Heart left ventricle (tissue), 16 donors: ENCODE measurements at regions of chr16 and their contacts with region 1.

Region 1: DNA sequence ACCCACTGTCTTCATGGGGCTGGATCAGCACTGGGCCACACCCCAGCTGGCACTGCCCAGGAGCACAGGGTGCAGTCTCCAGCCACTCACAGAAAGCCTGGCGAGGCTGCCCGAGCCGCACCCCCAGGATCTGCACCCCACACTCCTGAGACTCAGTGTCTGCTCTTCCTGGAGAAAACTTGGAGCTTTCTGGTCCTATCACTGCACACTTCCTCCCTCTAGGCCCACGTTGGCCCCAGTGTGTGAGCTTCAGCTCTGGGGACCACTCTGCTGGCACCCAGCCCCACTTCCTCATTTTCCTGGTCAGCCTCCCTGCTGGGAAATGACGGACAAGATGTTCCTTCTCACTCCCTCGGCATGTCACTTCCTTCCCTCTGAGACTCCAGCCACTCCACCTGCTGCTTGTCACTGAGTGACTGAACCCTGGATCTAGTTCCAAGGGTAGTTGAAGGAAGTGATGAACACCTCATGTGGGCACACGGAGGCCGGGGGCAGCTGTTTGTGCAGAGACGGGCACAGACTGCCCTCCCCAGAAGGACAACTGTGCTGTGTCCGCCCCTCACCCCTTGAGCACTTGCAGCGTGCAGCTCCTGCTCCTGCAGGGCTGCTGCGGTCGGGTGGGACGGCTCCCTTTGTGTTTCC is 29.0 kb downstream of the ZC3H18 start:
- DNase-seq: peak; percentile 88 to 93 (median 91)
- ATAC-seq: peak; percentile 86 to 96 (median 87)
- H3K4me3 ChIP-seq: peak overlapping the region in 1 of 12 donors; percentile 17
- H3K27ac ChIP-seq: peak overlapping the region; percentile 69 to 86 (median 80)
- H3K4me1 ChIP-seq: peaks cover 0 to 66% (median 36%) of the 10 kb centered on the region in 12 donors
- H3K27me3 ChIP-seq: no peaks in the 10 kb centered on the region
- CTCF ChIP-seq: no peak
- POLR2A ChIP-seq: peak in 1 of 2 donors; percentile 21

Region 2: GRCh38 chr16:88561485-88562369 is 37.5 kb before region 1 on chr16:
- intact Hi-C with region 1: no loop called
- DNase-seq: peak in 3 of 5 donors; percentile 29 to 44 (median 43)
- ATAC-seq: peak; percentile 39 to 59 (median 49)
- H3K4me3 ChIP-seq: peak overlapping the region in 7 of 12 donors; percentile 12 to 47 (median 22)
- H3K27ac ChIP-seq: no peak overlapping the region
- H3K4me1 ChIP-seq: peaks cover 0 to 16% (median 4%) of the 10 kb centered on the region in 12 donors
- H3K27me3 ChIP-seq: peaks cover 0 to 31% (median under 1%) of the 10 kb centered on the region in 9 donors
- CTCF ChIP-seq: peak; percentile 44 to 76 (median 62)
- POLR2A ChIP-seq: no peak

Region 3: GRCh38 chr16:88650749-88651275 is 51.6 kb after region 1 on chr16 and contains the start of gene CYBA:
- intact Hi-C with region 1: loop called in 1 of 10 experiments (anchors 5 kb)
- DNase-seq: peak; percentile 77 to 92 (median 84)
- ATAC-seq: peak; percentile 80 to 91 (median 86)
- H3K4me3 ChIP-seq: peak within 1 kb of the TSS; percentile 51 to 91 (median 76)
- H3K27ac ChIP-seq: peak within 1 kb of the TSS; percentile 17 to 94 (median 74)
- H3K4me1 ChIP-seq: peaks cover 0 to 49% (median 14%) of the 10 kb centered on the region in 12 donors
- H3K27me3 ChIP-seq: no peaks in the 10 kb centered on the region
- CTCF ChIP-seq: no peak
- POLR2A ChIP-seq: peak in 1 of 2 donors; percentile 30
- total RNA-seq, gene CYBA: 22.6 to 227 (median 34.4) TPM